Activated B cell treated with CpG ODN at 0.5 μM for 24 hours (primary cell): ENCODE measurements at regions of chr5 and their contacts with region 1.

Region 1: DNA sequence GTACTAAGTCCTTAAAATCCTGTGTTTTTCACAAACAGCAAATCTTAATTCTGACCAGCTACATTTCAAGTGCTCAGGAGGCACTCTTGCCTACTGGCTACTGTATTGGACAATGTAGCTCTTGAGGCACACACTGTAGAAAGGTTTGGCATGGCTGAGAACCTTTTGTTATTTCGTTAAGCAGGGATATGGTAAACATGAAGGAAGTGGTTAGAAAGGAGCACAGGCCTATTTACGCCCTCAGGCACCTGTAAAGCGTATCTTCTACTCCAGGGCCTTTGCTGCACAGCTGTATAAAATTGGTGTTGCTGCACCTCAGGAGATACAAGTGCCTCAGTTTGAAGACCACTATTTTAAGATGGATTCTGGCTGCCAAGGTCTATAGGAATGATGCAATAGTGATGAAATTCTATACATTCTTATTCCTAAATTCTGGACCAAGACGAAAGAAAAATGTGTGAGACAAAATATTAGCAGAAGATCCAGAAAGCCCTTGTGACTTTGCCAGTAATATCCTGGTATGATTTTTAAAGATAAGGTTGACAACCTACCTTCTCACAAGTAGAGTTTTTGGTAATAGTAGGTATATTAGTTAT is 9.3 kb upstream of the OTULIN start:
- DNase-seq: no peak
- ATAC-seq: no peak
- H3K4me3 Mint-ChIP-seq: no peak overlapping the region
- H3K27ac Mint-ChIP-seq: peak overlapping the region; percentile 86
- H3K4me1 Mint-ChIP-seq: peaks cover 45% of the 10 kb centered on the region
- H3K27me3 Mint-ChIP-seq: no peaks in the 10 kb centered on the region
- CTCF ChIP-seq: no peak

Region 2: GRCh38 chr5:13909271-13909670 is 746.0 kb before region 1 on chr5:
- CTCF ChIA-PET with region 1: no interaction called
- POLR2A ChIA-PET with region 1: no interaction called
- intact Hi-C with region 1: no loop called
- DNase-seq: no peak
- ATAC-seq: no peak
- H3K4me3 Mint-ChIP-seq: no peak overlapping the region
- H3K27ac Mint-ChIP-seq: no peak overlapping the region
- H3K4me1 Mint-ChIP-seq: no peaks in the 10 kb centered on the region
- H3K27me3 Mint-ChIP-seq: peaks cover 6% of the 10 kb centered on the region
- CTCF ChIP-seq: no peak

Region 3: DNA sequence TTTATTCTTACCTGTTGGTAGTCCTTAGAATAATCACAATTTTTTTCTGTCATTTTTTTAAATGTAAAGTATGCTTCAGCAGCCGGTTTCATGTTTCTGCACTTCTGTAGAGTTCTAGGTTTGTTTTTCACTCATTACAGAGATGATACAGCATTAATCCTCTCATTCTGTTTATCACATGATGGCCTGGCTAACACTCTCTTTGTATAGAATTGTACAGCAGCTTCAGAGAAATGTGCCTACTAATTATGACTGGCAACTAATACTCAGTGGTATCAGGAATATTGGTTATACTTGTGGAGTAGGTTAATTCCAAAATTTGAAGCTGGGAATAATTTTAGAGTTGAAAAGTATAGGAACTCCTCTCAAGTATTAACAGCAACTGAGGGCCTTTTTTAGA is 266.5 kb before region 1 on chr5:
- CTCF ChIA-PET with region 1: no interaction called
- POLR2A ChIA-PET with region 1: interaction called, 10 read pairs
- intact Hi-C with region 1: no loop called
- DNase-seq: no peak
- ATAC-seq: no peak
- H3K4me3 Mint-ChIP-seq: no peak overlapping the region
- H3K27ac Mint-ChIP-seq: no peak overlapping the region
- H3K4me1 Mint-ChIP-seq: no peaks in the 10 kb centered on the region
- H3K27me3 Mint-ChIP-seq: no peaks in the 10 kb centered on the region
- CTCF ChIP-seq: no peak